Panc1 (cell line): ENCODE measurements at regions of chr15 and their contacts with region 1.

Region 1: GRCh38 chr15:84570164-84570735 is 30.6 kb upstream of the ZSCAN2 start:
- DNase-seq: no peak
- ATAC-seq: peak; percentile 82
- H3K4me3 ChIP-seq: peak overlapping the region; percentile 72 to 83
- H3K27ac ChIP-seq: peak overlapping the region; percentile 74
- H3K4me1 ChIP-seq: peaks cover 4% of the 10 kb centered on the region; the same call in 1 of the 2 replicates
- H3K27me3 ChIP-seq: no peaks in the 10 kb centered on the region
- CTCF ChIP-seq: no peak

Region 2: GRCh38 chr15:84142888-84143337 is 427.3 kb before region 1 on chr15:
- CTCF ChIA-PET with region 1: interaction called, 10 read pairs
- POLR2A ChIA-PET with region 1: no interaction called
- in situ Hi-C with region 1: no loop called
- intact Hi-C with region 1: no loop called
- DNase-seq: peak; percentile 78
- ATAC-seq: peak; percentile 100
- H3K4me3 ChIP-seq: no peak overlapping the region
- H3K27ac ChIP-seq: no peak overlapping the region
- H3K4me1 ChIP-seq: no peaks in the 10 kb centered on the region
- H3K27me3 ChIP-seq: no peaks in the 10 kb centered on the region
- CTCF ChIP-seq: peak; percentile 83

Region 3: DNA sequence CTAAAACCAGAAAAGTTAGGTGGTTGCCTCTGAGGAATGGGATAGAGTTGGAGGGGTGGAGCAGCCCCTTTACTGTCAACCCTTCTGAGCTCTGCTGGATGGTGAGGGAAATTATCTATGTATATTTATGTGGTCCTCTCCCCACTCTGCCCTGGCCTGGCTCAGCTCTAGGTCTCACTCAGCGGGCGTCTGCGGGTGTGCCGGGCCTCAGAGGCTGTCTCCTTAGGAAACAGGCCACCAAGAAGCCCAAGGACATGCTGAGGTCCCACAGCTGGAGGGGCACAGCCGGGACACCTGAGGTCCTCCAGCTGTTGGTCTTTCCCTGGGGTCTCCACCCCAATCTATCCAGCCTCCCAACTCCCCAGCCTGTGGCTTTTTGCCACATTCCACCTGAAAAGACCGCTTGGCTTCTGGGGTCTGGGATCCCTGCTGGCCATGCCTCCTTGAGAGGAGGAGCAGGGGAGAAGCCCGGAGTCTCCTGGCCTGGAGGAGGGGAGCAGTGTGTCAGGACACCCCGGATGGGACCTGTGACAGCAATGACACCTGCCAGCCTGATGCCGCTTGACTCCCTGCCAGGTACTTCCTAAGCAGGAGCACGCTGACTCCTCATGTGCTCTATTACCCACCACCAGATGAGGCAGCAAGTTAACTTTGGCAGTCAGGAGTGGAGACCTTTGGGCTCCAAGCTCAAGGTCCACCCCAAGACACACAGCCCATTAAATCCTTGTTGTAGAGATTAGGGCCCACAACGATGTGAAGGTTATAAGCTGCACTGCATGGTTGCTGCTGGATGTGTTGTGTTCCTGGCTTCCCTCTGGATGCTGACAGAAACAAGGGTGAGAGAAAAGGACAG is 313.9 kb after region 1 on chr15 and contains the start of gene SLC28A1:
- CTCF ChIA-PET with region 1: no interaction called
- POLR2A ChIA-PET with region 1: no interaction called
- in situ Hi-C with region 1: no loop called
- intact Hi-C with region 1: no loop called
- DNase-seq: no peak
- ATAC-seq: no peak
- H3K4me3 ChIP-seq: no peak within 1 kb of the TSS
- H3K27ac ChIP-seq: no peak within 1 kb of the TSS
- H3K4me1 ChIP-seq: no peaks in the 10 kb centered on the region
- H3K27me3 ChIP-seq: no peaks in the 10 kb centered on the region
- CTCF ChIP-seq: no peak
- total RNA-seq, gene SLC28A1: not detected

Region 4: DNA sequence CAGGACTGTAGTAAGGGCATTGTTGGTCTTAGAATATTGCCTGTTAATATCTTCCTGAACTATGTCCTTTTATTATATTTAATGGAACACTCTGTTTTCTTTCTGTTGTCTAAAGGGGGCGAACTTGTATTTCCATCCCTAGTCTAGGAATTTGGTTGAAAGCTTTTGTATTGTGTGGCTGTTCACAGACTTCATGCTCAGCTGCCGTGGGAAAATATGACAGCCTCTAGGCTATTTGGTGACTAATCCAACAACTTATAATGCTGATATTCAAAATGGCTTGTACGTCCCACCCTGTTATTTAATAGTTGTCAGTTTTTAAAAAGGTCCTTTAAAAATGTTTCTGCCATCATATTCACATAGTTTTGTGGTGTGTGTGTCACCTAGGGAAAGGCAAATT is 1021.9 kb after region 1 on chr15:
- CTCF ChIA-PET with region 1: no interaction called
- POLR2A ChIA-PET with region 1: no interaction called
- in situ Hi-C with region 1: no loop called
- intact Hi-C with region 1: no loop called
- DNase-seq: no peak
- ATAC-seq: 0 out of 2 replicates have a peak, but pooled peaks have one; percentile 46
- H3K4me3 ChIP-seq: no peak overlapping the region
- H3K27ac ChIP-seq: no peak overlapping the region
- H3K4me1 ChIP-seq: no peaks in the 10 kb centered on the region
- H3K27me3 ChIP-seq: no peaks in the 10 kb centered on the region
- CTCF ChIP-seq: peak; percentile 21; the same call in 1 of the 2 replicates